ENCODE measurements at regions of chr15 and their contacts with region 1.

Region 1: GRCh38 chr15:96086164-96086563 is 244.3 kb upstream of the NR2F2 start:
- DNase-seq: no peak
- ATAC-seq: no peak
- H3K4me3 ChIP-seq: no peak overlapping the region
- H3K27ac ChIP-seq: no peak overlapping the region
- H3K4me1 ChIP-seq: no peaks in the 10 kb centered on the region
- H3K27me3 ChIP-seq: no peaks in the 10 kb centered on the region
- CTCF ChIP-seq: no peak

Region 2: GRCh38 chr15:96285305-96285704 is 199.1 kb after region 1 on chr15:
- CTCF ChIA-PET with region 1: no interaction called
- POLR2A ChIA-PET with region 1: interaction called, 12 read pairs
- in situ Hi-C with region 1: no loop called
- intact Hi-C with region 1: no loop called
- DNase-seq: no peak
- ATAC-seq: no peak
- H3K4me3 ChIP-seq: no peak overlapping the region
- H3K27ac ChIP-seq: no peak overlapping the region
- H3K4me1 ChIP-seq: no peaks in the 10 kb centered on the region
- H3K27me3 ChIP-seq: no peaks in the 10 kb centered on the region
- CTCF ChIP-seq: no peak

Measured in Panc1 (cell line).